ENCODE measurements at regions of chr13 and their contacts with region 1.

Region 1: GRCh38 chr13:46668302-46668720 is 115.3 kb downstream of the LRCH1 start:
- DNase-seq: peak; percentile 43
- ATAC-seq: peak; percentile 54 to 78

Region 2: GRCh38 chr13:45909673-45910072 is 758.6 kb before region 1 on chr13:
- intact Hi-C with region 1: no loop called
- DNase-seq: no peak
- ATAC-seq: no peak

Region 3: GRCh38 chr13:46603165-46603603 is 65.1 kb before region 1 on chr13:
- intact Hi-C with region 1: loop called in 1 of 2 experiments (anchors 10 kb)
- DNase-seq: no peak
- ATAC-seq: no peak